Activated T-helper 2 cell treated with anti-CD3 and anti-CD28 coated beads, Interferon-gamma antibody, Interleukin-2, Interleukin-4, amounts not matched to agents 10 μg/mL and 5 μg/mL and 100 μg/mL, durations not matched to agents 14 hours and 24 hours and 36 hours (primary cell): ENCODE measurements at regions of chr2 and their contacts with region 1.

Region 1: DNA sequence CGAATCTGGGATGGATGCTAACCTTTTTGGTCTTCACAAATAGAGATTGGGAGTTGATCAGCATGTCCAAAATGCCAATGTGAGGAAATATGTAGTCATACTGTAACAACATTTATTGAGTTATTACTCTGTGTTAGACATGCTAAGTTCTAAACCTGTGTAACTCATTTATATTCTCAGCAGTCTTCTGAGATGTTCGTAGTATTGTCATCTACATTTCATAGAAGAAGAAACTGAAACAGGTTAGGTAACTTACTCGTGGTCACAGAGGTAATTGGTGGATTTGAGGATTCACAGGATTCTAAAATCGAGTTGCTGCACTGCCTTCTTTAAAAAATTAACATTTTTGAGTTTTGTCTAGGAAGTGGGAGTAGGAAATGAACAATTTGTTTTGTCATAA is 162.1 kb downstream of the UBE2E3 start:
- DNase-seq: no peak
- H3K4me3 Mint-ChIP-seq: peak overlapping the region; percentile 81
- H3K27ac Mint-ChIP-seq: peak overlapping the region; percentile 94
- H3K4me1 Mint-ChIP-seq: peaks cover 74% of the 10 kb centered on the region
- H3K27me3 Mint-ChIP-seq: no peaks in the 10 kb centered on the region

Region 2: DNA sequence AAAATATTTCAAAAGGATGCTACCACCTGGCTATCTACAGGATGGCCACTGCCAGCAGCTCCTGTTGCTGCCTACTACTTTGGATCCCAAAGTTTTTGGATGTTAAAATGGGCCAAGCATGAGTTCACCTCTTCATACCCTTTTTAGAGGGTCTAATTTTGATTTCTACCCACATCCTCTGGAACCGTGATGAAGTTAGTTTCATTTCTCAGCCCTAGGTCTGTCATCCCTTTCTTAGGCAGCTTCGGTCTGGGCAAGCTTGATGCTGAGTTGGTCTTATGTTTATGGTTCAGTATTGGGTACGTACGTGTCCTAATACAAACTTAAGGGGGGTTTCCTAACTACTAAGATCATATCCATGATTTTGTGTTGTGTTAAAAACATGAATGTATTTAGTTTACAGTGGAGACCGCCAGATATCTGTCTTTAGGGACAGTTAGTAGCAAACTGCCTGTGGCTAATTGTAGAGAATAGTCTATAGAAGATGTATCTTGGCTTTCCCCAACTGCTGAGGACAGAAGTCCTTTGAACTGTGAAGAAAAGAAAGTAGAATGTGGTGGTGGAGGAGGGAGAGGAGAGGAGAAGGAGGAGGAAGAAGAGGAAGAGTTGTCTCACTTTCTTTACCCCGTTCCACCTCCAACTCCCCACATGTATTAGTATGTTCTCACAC is 22.8 kb after region 1 on chr2:
- intact Hi-C with region 1: loop called (anchors 1 kb)
- DNase-seq: no peak
- H3K4me3 Mint-ChIP-seq: peak overlapping the region; percentile 51
- H3K27ac Mint-ChIP-seq: peak overlapping the region; percentile 94
- H3K4me1 Mint-ChIP-seq: peaks cover 60% of the 10 kb centered on the region
- H3K27me3 Mint-ChIP-seq: no peaks in the 10 kb centered on the region